Right ventricle myocardium inferior (tissue), 1 donor: ENCODE measurements at regions of chr20 and their contacts with region 1.

Region 1: DNA sequence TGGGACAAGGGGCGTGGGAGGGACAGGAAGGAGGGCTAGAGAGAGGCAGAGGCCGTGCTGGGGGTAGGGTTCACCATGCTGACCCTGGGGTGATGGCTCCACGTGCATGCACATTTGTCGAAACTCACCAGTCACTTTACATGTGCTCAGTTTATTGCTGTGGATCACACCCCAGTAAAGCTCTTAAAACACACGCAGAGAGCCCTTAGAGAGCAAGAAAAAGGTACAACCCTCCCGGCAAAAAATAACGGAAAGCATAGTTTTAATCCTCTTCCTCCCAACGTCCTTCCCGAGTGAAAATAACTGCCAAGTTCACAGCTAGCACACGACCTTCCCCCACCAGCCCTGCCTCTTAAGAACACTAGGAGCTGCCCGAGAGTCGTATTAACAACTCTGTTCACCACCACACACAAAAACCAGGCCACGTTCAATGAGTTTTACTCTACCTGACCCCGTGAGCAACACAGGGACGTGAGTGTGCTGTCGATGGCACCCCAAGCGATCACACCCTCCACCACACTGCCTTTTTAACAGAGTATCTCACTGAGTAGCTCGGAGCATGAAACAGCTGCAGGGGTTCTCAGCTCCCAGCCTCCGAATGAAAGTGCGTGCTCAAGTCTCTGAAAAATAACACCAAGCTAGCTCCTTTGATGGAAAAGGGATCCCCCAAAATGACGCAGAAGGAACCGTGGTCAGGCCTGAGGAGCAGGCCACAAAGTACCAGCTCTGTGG is 39.7 kb downstream of the TAF4 start:
- DNase-seq: peak; percentile 46
- ATAC-seq: peak; percentile 73

Region 2: DNA sequence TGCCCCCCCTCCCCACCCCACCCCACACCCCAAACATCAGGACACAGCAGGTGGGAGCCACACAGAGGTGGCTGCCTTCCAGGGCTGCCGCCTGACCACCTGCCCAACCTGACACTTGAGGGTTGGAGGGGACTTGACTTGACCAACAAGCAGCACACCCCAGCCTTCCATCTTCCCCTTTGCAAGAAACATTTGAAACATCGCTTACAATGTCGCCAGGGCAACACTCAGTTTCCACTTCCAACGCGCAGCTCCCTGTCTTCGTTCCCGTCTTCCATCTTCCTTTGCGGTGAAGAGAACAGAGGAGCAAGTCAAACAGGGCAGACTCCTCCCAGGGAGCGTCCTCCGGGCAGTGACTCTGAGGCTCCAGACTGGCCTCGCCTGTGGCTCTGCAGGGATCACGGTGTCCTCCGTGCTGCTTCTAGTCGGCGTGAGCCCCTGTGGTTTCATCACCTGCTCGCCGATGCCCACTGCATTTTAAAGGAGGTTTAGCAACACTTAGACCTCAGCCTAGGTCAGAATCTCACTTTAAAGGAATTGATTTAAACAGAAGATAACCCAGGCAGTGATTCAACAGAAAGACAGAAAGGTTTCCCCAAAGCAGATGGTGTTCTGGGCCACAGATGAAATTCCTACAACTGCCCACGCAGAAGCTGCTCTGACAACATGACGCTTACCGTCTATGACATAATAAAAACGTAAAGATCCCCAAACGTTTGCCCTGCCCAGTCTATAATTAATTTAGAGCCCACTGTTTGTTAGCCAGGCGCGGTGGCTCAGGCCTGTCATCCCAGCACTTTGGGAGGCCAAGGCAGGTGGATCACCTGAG is 91.1 kb before region 1 on chr20:
- intact Hi-C with region 1: no loop called
- DNase-seq: peak; percentile 34
- ATAC-seq: no peak

Region 3: DNA sequence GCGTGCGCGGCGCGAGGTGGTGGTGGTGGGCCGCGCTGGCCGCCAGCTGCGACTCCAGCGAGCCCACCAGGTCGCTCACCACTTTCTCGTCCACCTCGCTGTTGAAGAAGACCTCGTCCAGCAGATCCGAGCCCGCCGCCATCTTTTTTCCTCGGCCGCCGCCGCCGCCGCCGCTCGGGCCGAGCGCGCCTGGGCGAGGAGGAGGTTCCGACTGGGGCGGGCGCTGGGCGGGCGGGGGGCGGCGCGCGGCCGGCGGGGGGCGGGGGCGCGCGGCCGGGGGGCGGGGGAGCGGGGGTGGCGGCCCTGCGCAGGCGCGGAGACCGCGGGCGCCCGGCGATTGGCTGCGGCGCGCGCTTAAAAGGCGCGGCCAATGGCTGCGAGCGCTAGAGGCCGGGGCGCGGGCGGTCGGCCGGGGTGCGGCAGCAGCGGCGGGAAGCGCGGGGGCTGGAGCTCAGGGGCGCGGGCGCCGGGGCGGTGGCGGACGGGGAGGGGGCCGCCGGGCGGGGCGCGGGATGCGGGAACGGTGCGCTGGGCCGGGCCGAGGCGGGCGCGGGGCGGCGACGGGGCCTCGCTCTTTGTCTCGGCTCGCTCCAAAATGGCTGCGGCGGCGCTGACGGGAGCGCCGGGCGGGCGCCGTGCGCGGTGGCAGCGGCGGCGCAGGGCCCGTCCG is 39.8 kb after region 1 on chr20 and contains the start of gene TAF4:
- intact Hi-C with region 1: loop called (anchors 2 kb)
- DNase-seq: peak; percentile 90
- ATAC-seq: peak; percentile 67
- total RNA-seq, gene TAF4: 10.7 TPM

Region 4: DNA sequence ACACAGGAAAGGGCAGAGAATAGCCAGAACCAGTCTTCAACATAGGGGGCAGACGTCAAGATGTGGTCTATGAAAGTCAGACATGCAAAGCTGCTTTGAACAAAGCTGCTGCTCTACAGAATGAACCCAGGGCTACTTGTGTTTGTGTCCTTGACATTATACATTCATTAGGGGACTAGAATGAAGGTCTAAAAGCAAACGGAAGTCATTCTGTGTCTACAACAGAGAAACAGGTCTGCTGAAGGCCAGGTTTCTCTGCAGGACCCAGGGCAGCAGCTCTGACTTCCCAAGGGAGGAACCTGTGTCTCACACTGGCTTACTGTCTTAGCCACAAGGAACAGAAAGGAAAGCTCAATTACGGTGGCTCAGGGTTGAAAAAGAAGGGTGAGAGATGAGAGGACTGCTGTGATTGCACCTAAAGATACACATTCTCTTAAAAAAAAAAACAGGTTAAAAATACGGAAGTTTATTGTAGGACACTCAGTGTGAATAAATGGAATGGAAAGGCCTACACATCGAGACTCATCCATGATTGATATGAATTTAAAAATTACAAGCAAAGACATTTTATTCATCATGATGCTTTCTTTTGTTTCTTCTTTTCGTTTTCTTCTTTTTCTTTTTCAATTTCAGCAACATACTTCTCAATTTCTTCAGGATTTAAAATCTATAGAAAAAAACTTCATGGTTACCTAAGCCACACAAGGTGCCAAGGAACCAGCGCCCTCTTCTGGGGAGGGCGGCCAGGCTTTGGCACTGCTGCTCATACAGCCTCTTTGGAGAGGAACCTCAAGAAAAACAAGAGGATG is 110.5 kb after region 1 on chr20:
- intact Hi-C with region 1: loop called (anchors 1 kb)
- DNase-seq: peak; percentile 83
- ATAC-seq: peak; percentile 29

Region 5: GRCh38 chr20:62386383-62387218 is 360.6 kb after region 1 on chr20 and contains the start of gene RPS21:
- intact Hi-C with region 1: loop called (anchors 10 kb)
- DNase-seq: peak; percentile 97
- ATAC-seq: peak; percentile 93
- total RNA-seq, gene RPS21: 782 TPM